Uterus (tissue), 4 donors: ENCODE measurements at regions of chr9 and their contacts with region 1.

Region 1: DNA sequence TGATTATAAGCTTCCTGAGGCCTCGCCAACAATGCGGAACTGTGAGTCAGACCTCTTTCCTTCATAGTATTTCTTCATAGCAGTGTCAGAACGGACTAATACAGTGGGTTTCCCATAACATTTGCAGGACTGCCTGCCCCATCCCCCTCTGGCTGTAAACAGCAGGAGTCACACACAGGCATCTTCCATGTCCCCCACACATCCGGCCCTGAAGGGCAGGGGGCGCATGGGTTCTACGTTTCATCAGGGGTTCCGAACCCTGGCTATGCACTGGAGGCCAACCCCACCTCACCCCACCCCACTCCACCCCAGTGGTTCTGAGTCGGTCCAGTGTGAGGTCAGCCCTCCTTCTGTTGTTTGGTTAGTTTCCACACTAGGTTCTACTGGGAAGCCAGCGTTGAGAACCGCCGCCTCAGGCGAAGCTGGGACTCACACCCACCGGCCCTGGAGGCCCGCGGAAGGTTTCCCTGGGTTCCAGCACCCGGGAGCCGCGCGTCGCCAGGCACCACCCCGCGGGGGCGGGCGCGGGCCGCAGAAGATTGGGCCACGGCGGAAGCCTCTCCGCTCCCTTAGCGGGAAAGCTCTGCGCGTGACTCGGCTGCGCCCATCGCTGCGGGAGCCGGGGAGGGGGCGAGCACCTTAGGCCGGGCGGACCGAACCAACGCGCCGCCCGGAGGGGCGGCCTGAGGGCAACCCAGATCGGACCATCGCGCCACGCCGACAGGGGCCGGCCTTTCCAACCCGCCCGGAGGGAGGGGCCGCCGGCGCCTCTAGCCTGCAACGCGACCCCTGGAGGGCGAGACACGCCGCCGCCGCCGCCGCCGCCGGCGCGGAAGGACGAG is at the start of gene RUSC2:
- DNase-seq: peak; percentile 85 to 88
- H3K4me3 ChIP-seq: peak within 1 kb of the TSS; percentile 66 to 75
- H3K27ac ChIP-seq: peak within 1 kb of the TSS; percentile 95 to 96
- H3K4me1 ChIP-seq: no peaks in the 10 kb centered on the region
- H3K27me3 ChIP-seq: no peaks in the 10 kb centered on the region
- CTCF ChIP-seq: peak; percentile 33 to 59 (median 52)
- POLR2A ChIP-seq: peak; percentile 62 to 77
- total RNA-seq, gene RUSC2: 10.0 to 60.2 (median 16.8) TPM

Region 2: DNA sequence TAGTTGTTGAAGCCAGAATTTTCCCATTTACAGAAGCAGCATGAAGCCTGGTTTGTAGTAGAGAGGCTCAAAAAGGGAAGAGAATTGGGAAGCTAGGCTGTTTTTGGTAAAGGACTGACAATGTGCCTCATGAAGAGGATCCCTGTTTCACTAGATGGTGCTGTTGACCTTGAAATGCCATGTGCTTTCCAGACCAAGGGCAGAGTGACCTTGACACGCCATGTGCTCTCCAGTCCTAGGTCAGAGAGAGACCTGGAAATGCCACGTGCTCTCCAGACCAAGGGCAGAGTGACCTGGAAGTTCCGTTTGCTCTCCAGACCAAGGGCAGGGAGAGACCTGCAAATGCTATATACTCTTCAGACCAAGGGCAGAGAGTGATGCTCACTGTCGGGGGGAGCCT is 295.8 kb before region 1 on chr9:
- intact Hi-C with region 1: no loop called
- DNase-seq: no peak
- H3K4me3 ChIP-seq: no peak overlapping the region
- H3K27ac ChIP-seq: no peak overlapping the region
- H3K4me1 ChIP-seq: no peaks in the 10 kb centered on the region
- H3K27me3 ChIP-seq: no peaks in the 10 kb centered on the region
- CTCF ChIP-seq: peak in 1 of 4 experiments; percentile 11
- POLR2A ChIP-seq: no peak

Region 3: DNA sequence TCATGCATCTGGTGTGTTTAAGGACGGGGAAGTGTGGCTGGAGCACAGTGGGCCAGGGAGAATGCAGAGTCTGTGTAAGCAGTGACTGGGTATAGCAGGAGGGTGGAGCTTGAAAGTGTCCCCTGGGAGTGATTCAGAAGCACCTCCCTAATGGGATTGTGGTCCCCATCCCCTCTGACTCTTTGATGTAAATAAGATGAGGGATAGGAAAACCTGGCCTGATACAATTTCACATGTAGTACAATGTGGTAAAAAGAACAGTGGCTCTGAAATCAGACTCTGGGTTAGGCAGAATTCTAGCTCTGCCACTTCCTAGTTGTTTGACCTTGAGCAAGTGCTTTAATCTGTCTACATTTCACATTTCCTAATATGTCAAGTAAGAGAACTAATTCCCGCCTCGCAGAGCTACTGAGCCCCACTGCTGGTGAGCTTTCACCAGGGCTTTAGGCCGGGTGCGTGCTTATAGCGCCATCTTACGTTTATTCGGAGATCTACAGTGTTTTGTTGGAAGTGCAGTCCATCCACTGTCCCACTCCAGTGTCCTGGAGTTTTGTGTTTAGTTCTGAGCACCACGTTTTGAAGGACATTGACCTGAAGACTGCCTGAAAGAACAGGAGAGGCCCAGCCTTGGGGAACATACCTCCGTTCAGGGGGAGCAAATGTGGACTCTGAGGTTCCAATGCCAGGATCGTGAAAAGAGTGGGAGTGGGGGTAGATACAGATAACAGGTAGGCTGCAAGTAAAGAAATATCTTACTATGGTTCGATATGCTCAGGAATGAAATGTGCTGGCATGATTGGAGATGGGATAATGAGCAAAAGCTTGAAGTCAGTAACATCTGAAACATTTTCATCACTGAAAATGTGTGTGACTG is 64.4 kb after region 1 on chr9:
- intact Hi-C with region 1: loop called (anchors 5 kb)
- DNase-seq: peak; percentile 65 to 78
- H3K4me3 ChIP-seq: no peak overlapping the region
- H3K27ac ChIP-seq: peak overlapping the region; percentile 45 to 72
- H3K4me1 ChIP-seq: peaks cover 3 to 5% of the 10 kb centered on the region in 2 donors
- H3K27me3 ChIP-seq: no peaks in the 10 kb centered on the region
- CTCF ChIP-seq: peak; percentile 88 to 95 (median 92)
- POLR2A ChIP-seq: no peak